ENCODE measurements at regions of chr1 and their contacts with region 1.

Region 1: GRCh38 chr1:16978567-16979474 is 1.6 kb downstream of the MFAP2 start:
- DNase-seq: no peak
- H3K4me3 ChIP-seq: peak overlapping the region; percentile 92
- H3K27ac ChIP-seq: peak overlapping the region; percentile 36
- H3K4me1 ChIP-seq: peaks cover 13% of the 10 kb centered on the region
- H3K27me3 ChIP-seq: no peaks in the 10 kb centered on the region
- CTCF ChIP-seq: no peak

Region 2: DNA sequence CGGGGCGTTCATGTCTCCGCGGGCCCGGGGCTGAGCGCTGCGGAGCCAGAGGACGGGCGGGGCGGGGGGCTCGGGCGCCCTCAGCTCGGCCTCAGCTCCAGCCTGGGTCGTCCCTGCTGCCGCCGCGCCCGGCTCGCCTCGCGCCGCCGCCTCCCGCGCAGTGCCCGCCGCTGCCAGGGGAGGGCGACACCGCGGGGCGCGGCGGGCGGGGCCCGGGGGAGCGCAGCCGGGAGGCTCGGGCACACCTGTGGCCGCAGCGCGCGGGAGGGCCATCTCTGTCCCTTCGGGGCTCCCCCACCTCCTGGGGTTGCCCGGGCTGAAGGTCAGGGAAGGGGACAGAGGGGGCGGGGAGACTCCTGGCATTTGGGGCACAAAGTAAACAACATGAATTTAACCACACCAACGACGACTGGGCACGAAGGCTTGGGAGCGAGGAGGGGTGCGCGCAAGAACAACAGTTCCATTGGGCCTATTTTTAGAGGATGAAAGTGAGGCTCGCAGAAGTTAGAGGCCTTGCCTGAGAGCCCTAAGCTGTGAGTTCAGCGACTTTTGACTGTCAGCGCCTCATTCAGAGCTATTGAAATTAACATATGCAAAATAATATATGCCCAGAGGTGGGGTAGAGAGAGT is 905.2 kb before region 1 on chr1 and contains the start of gene FAM131C:
- CTCF ChIA-PET with region 1: no interaction called
- POLR2A ChIA-PET with region 1: no interaction called
- intact Hi-C with region 1: no loop called
- DNase-seq: peak; percentile 47
- H3K4me3 ChIP-seq: peak within 1 kb of the TSS; percentile 53
- H3K27ac ChIP-seq: no peak within 1 kb of the TSS
- H3K4me1 ChIP-seq: no peaks in the 10 kb centered on the region
- H3K27me3 ChIP-seq: no peaks in the 10 kb centered on the region
- CTCF ChIP-seq: no peak; the same call in 1 of the 2 replicates
- total RNA-seq, gene FAM131C: 0.71 and 1.3 TPM in 2 replicates

Region 3: GRCh38 chr1:17009706-17010105 is 30.9 kb after region 1 on chr1:
- CTCF ChIA-PET with region 1: no interaction called
- POLR2A ChIA-PET with region 1: no interaction called
- intact Hi-C with region 1: loop called (anchors 2 kb)
- DNase-seq: peak; percentile 40
- H3K4me3 ChIP-seq: no peak overlapping the region
- H3K27ac ChIP-seq: no peak overlapping the region
- H3K4me1 ChIP-seq: peaks cover 18% of the 10 kb centered on the region
- H3K27me3 ChIP-seq: no peaks in the 10 kb centered on the region
- CTCF ChIP-seq: no peak

Measured in A673 (cell line).